Thyroid gland (tissue), 4 donors: ENCODE measurements at regions of chr15 and their contacts with region 1.

Region 1: GRCh38 chr15:66774001-66774814 is 72.2 kb downstream of the SMAD6 start:
- DNase-seq: peak; percentile 95 to 96
- H3K4me3 ChIP-seq: peak overlapping the region in 1 of 3 donors; percentile 2
- H3K27ac ChIP-seq: peak overlapping the region; percentile 88 to 94 (median 92)
- H3K4me1 ChIP-seq: peaks cover 50 to 99% of the 10 kb centered on the region in 2 donors
- H3K27me3 ChIP-seq: no peaks in the 10 kb centered on the region
- CTCF ChIP-seq: peak; percentile 92 to 100 (median 97)
- POLR2A ChIP-seq: peak in 1 of 2 donors; percentile 54

Region 2: GRCh38 chr15:66504563-66505429 is 269.4 kb before region 1 on chr15 and contains the starts of genes RPL4 and ZWILCH:
- intact Hi-C with region 1: loop called (anchors 10 kb)
- DNase-seq: peak; percentile 70 to 77
- H3K4me3 ChIP-seq: peak within 1 kb of the TSS; percentile 64 to 98 (median 84)
- H3K27ac ChIP-seq: peak within 1 kb of the TSS; percentile 85 to 95 (median 92)
- H3K4me1 ChIP-seq: peaks cover 12 to 16% of the 10 kb centered on the region in 2 donors
- H3K27me3 ChIP-seq: no peaks in the 10 kb centered on the region
- CTCF ChIP-seq: no peak
- POLR2A ChIP-seq: peak; percentile 77 to 88
- total RNA-seq, gene RPL4: 3,485 to 7,540 (median 5,598) TPM
- total RNA-seq, gene ZWILCH: 3.8 to 6.4 (median 5.3) TPM

Region 3: GRCh38 chr15:66619151-66619903 is 154.9 kb before region 1 on chr15:
- intact Hi-C with region 1: loop called (anchors 5 kb)
- DNase-seq: peak; percentile 76 to 82
- H3K4me3 ChIP-seq: no peak overlapping the region
- H3K27ac ChIP-seq: peak overlapping the region in 2 of 3 donors; percentile 45 to 78
- H3K4me1 ChIP-seq: peaks cover 11 to 56% of the 10 kb centered on the region in 2 donors
- H3K27me3 ChIP-seq: no peaks in the 10 kb centered on the region
- CTCF ChIP-seq: peak; percentile 76 to 90 (median 86)
- POLR2A ChIP-seq: no peak

Region 4: DNA sequence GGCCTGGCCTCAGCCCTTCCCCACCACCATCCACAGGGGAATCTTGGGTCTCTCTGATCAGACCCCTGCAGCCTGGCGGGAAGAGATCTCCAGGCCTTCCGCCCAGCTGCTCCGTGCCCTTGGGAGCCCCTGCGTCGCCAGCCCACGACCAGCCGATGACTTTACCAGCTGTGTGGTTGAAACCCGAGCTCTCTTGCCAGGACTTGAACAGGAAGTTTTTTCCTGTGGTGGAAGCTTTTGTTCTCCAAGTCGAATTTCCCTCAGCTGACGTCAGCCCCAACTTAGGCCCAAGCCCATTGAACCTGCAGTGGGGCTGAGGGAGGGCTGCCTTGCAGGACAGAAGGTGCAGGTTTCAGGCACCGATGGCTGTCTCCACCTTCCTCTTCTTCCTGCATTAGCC is 239.5 kb after region 1 on chr15:
- intact Hi-C with region 1: no loop called
- DNase-seq: no peak
- H3K4me3 ChIP-seq: no peak overlapping the region
- H3K27ac ChIP-seq: no peak overlapping the region
- H3K4me1 ChIP-seq: no peaks in the 10 kb centered on the region
- H3K27me3 ChIP-seq: no peaks in the 10 kb centered on the region
- CTCF ChIP-seq: no peak
- POLR2A ChIP-seq: no peak

Region 5: GRCh38 chr15:67024314-67024997 is 250.2 kb after region 1 on chr15:
- intact Hi-C with region 1: no loop called
- DNase-seq: peak; percentile 63 to 72
- H3K4me3 ChIP-seq: no peak overlapping the region
- H3K27ac ChIP-seq: peak overlapping the region in 2 of 3 donors; percentile 55 to 57
- H3K4me1 ChIP-seq: peaks cover 29 to 32% of the 10 kb centered on the region in 2 donors
- H3K27me3 ChIP-seq: no peaks in the 10 kb centered on the region
- CTCF ChIP-seq: peak in 1 of 6 experiments; percentile 5
- POLR2A ChIP-seq: no peak